ENCODE measurements at regions of chr5 and their contacts with region 1.

Region 1: GRCh38 chr5:60295423-60295822 is 401.9 kb upstream of the PDE4D start:
- DNase-seq: peak; percentile 25
- ATAC-seq: peak; percentile 82
- H3K4me3 ChIP-seq: no peak overlapping the region
- H3K27ac ChIP-seq: no peak overlapping the region
- H3K4me1 ChIP-seq: no peaks in the 10 kb centered on the region
- H3K27me3 ChIP-seq: no peaks in the 10 kb centered on the region
- CTCF ChIP-seq: peak; percentile 63 to 75 (median 64)
- EP300 ChIP-seq: no peak
- POLR2A ChIP-seq: no peak
- RAD21 ChIP-seq: peak; percentile 79

Region 2: DNA sequence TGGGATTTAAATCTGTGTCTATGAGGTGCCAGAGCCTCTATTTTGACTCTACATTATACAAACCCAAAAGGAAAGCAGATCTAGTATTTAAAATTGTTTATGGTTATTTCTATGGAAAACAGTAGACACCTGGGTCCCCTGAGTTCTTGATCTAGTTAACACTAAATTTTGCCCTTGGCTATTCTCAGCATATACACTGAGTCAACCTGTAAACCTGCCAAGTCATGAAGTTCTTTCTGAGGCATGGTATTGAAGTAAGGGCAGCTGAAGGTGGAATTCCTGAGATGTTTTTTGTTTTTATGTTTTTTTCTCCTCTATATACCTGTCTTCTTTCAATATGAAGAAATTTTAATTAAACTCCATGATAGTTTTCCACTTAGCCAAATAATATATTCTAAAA is 522.1 kb before region 1 on chr5:
- CTCF ChIA-PET with region 1: no interaction called
- POLR2A ChIA-PET with region 1: no interaction called
- RAD21 ChIA-PET with region 1: no interaction called
- SMC1A ChIA-PET with region 1: no interaction called
- in situ Hi-C with region 1: no loop called
- intact Hi-C with region 1: no loop called
- DNase-seq: no peak
- ATAC-seq: no peak
- H3K4me3 ChIP-seq: no peak overlapping the region
- H3K27ac ChIP-seq: no peak overlapping the region
- H3K4me1 ChIP-seq: no peaks in the 10 kb centered on the region
- H3K27me3 ChIP-seq: peaks cover 2 to 11% of the 10 kb centered on the region in 2 experiments; a peak in 2 of 4 replicates
- CTCF ChIP-seq: no peak
- EP300 ChIP-seq: no peak
- POLR2A ChIP-seq: no peak
- RAD21 ChIP-seq: no peak

Region 3: GRCh38 chr5:60271517-60271916 is 23.9 kb before region 1 on chr5:
- CTCF ChIA-PET with region 1: no interaction called
- POLR2A ChIA-PET with region 1: no interaction called
- RAD21 ChIA-PET with region 1: no interaction called
- SMC1A ChIA-PET with region 1: no interaction called
- in situ Hi-C with region 1: no loop called
- intact Hi-C with region 1: no loop called
- DNase-seq: no peak
- ATAC-seq: no peak
- H3K4me3 ChIP-seq: no peak overlapping the region
- H3K27ac ChIP-seq: no peak overlapping the region
- H3K4me1 ChIP-seq: no peaks in the 10 kb centered on the region
- H3K27me3 ChIP-seq: no peaks in the 10 kb centered on the region
- CTCF ChIP-seq: no peak
- EP300 ChIP-seq: no peak
- POLR2A ChIP-seq: no peak
- RAD21 ChIP-seq: no peak

Region 4: DNA sequence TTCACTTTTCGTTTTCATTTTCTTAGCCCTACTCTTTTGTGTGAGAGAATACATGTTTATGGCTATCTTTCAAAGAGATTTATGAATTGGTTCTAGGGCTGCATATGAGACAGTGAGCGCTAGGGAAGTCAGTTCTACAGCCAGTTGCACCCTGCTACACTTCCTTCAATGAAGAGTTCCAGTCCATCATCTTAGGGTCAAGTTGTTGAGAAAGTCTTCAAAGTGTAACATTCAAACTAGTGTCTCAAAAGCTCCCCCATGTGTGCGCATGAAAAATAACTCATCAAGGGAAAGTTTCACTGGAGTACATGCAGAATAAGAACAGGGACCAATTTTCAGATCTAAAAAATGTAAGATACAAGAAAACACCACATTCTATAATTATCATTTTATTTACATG is 87.3 kb after region 1 on chr5:
- CTCF ChIA-PET with region 1: interaction called, 21 read pairs
- POLR2A ChIA-PET with region 1: no interaction called
- RAD21 ChIA-PET with region 1: interaction called, 5 read pairs
- SMC1A ChIA-PET with region 1: interaction called, 10 read pairs
- in situ Hi-C with region 1: no loop called
- intact Hi-C with region 1: loop called (anchors 1 kb)
- DNase-seq: peak; percentile 40
- ATAC-seq: peak; percentile 57
- H3K4me3 ChIP-seq: no peak overlapping the region
- H3K27ac ChIP-seq: no peak overlapping the region
- H3K4me1 ChIP-seq: peaks cover 7% of the 10 kb centered on the region
- H3K27me3 ChIP-seq: no peaks in the 10 kb centered on the region
- CTCF ChIP-seq: peak; percentile 38 to 56 (median 46); a peak in 5 of 6 replicates
- EP300 ChIP-seq: no peak
- POLR2A ChIP-seq: no peak
- RAD21 ChIP-seq: peak; percentile 83

Region 5: GRCh38 chr5:60586307-60586901 is 291.0 kb after region 1 on chr5:
- CTCF ChIA-PET with region 1: interaction called, 11 read pairs
- POLR2A ChIA-PET with region 1: no interaction called
- RAD21 ChIA-PET with region 1: interaction called, 4 read pairs
- SMC1A ChIA-PET with region 1: interaction called, 5 read pairs
- in situ Hi-C with region 1: no loop called
- intact Hi-C with region 1: loop called (anchors 1 kb)
- DNase-seq: no peak
- ATAC-seq: peak; percentile 38; the same call in 2 of the 3 replicates
- H3K4me3 ChIP-seq: no peak overlapping the region
- H3K27ac ChIP-seq: no peak overlapping the region
- H3K4me1 ChIP-seq: peaks cover 8% of the 10 kb centered on the region; the same call in 1 of the 2 replicates
- H3K27me3 ChIP-seq: no peaks in the 10 kb centered on the region
- CTCF ChIP-seq: peak; percentile 32 to 55 (median 53); a peak in 5 of 6 replicates
- EP300 ChIP-seq: no peak
- POLR2A ChIP-seq: no peak
- RAD21 ChIP-seq: peak; percentile 78

Region 6: DNA sequence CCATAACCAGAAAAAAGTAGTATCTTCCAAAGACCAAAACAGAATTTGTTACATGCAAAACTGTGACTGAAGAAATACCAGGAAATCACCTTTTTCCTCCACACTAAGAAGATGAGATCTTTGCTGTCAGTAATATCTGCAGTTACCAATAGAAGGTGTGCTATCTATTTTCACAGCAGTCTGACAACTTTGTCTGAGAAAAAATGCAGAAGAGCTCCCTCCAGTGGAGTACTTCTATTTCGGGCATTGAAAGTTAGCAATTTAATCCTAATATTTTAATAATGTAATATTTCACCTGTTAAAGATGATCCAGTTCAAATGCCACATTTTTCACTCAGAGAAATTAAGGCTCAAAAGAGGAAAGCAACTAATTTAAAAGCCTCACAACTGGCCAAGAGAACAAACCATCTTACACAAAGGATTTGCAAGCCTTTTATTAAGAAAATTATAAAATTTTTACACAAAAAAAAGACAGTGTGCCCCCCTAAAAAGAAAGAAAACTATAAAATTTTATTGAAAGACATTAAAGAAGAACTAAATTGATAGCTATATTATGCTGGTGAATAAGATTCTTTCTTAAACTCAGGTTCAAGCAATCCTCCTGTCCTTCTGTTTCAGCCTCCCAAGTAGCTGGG is 354.0 kb after region 1 on chr5:
- CTCF ChIA-PET with region 1: interaction called, 10 read pairs
- POLR2A ChIA-PET with region 1: no interaction called
- RAD21 ChIA-PET with region 1: interaction called, 6 read pairs
- SMC1A ChIA-PET with region 1: interaction called, 11 read pairs
- in situ Hi-C with region 1: no loop called
- intact Hi-C with region 1: loop called (anchors 1 kb)
- DNase-seq: peak; percentile 15
- ATAC-seq: peak; percentile 86
- H3K4me3 ChIP-seq: no peak overlapping the region
- H3K27ac ChIP-seq: no peak overlapping the region
- H3K4me1 ChIP-seq: no peaks in the 10 kb centered on the region
- H3K27me3 ChIP-seq: no peaks in the 10 kb centered on the region
- CTCF ChIP-seq: peak; percentile 49 to 70 (median 59); a peak in 5 of 6 replicates
- EP300 ChIP-seq: no peak
- POLR2A ChIP-seq: no peak
- RAD21 ChIP-seq: peak; percentile 81

Region 7: GRCh38 chr5:60668686-60669304 is 373.4 kb after region 1 on chr5:
- CTCF ChIA-PET with region 1: interaction called, 15 read pairs
- POLR2A ChIA-PET with region 1: no interaction called
- RAD21 ChIA-PET with region 1: interaction called, 5 read pairs
- SMC1A ChIA-PET with region 1: interaction called, 6 read pairs
- in situ Hi-C with region 1: no loop called
- intact Hi-C with region 1: loop called (anchors 2 kb)
- DNase-seq: no peak
- ATAC-seq: no peak; the same call in 2 of the 3 replicates
- H3K4me3 ChIP-seq: no peak overlapping the region
- H3K27ac ChIP-seq: no peak overlapping the region
- H3K4me1 ChIP-seq: no peaks in the 10 kb centered on the region
- H3K27me3 ChIP-seq: no peaks in the 10 kb centered on the region
- CTCF ChIP-seq: peak; percentile 31 to 56 (median 46); a peak in 4 of 6 replicates
- EP300 ChIP-seq: no peak
- POLR2A ChIP-seq: no peak
- RAD21 ChIP-seq: peak; percentile 45

Region 8: DNA sequence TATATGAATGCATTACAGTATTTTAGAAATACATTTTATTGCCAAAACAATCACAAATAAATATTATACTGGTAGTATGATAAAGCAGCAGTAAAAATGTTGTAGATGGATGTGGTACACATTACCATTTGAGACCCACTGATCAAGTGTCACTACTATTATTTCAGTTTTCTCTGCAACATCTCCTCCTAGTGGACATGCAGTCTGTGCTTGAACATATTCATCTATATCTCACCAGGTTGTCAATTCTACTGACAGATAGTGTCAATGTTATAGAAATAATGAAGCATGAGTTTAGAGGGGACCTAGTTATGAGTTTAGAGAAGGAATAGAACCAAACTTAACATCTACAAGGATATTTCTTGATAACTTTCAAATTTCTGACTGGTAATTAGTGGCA is 587.8 kb after region 1 on chr5:
- CTCF ChIA-PET with region 1: no interaction called
- POLR2A ChIA-PET with region 1: no interaction called
- RAD21 ChIA-PET with region 1: no interaction called
- SMC1A ChIA-PET with region 1: no interaction called
- in situ Hi-C with region 1: no loop called
- intact Hi-C with region 1: loop called (anchors 5 kb)
- DNase-seq: no peak
- ATAC-seq: peak; percentile 68
- H3K4me3 ChIP-seq: no peak overlapping the region
- H3K27ac ChIP-seq: no peak overlapping the region
- H3K4me1 ChIP-seq: no peaks in the 10 kb centered on the region
- H3K27me3 ChIP-seq: no peaks in the 10 kb centered on the region
- CTCF ChIP-seq: peak; percentile 47 to 58 (median 50); a peak in 5 of 6 replicates
- EP300 ChIP-seq: no peak
- POLR2A ChIP-seq: no peak
- RAD21 ChIP-seq: peak; percentile 50

Region 9: DNA sequence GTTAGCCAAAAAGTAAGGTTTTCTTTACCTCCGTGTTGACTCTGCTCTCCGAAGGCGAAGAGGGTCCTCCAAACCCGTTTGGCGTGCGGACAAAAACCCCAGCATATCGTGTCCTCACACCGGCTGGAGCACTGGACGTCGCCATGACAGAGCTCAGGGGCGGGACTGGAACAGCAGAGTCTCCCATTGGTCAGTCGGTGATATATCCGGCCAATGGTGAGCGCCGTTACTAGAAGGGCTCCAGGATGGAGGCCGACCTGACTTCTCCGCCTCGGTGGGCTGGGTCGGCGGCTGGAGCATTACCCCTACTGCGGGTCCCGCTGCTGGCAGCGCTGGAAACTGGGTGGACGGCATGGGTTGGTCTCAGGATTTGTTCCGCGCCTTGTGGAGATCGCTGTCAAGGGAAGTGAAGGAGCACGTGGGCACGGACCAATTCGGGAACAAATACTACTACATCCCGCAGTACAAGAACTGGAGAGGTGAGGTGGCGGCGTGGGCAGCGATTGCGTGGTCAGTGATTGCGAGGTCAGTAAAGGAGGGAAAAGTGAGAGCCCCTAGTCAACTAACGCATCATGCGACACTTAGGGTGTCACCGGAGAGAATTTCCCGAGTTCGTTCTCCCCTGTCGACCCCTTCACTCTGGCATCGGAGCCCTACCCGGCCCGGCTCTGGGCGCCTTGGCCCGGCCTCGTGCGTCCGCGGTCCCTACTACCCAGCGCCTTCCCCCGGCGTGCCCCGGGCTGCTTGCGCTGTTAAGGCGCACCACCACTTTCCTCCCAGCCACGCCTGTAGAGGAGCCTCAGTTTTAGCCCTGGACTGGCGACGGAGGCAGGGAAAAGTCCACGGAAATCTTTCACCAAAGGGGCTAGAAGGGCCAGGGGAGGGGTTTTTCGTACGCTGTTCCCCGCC is 649.7 kb after region 1 on chr5 and contains the starts of genes ERCC8 and NDUFAF2:
- CTCF ChIA-PET with region 1: no interaction called
- POLR2A ChIA-PET with region 1: no interaction called
- RAD21 ChIA-PET with region 1: no interaction called
- SMC1A ChIA-PET with region 1: no interaction called
- in situ Hi-C with region 1: no loop called
- intact Hi-C with region 1: loop called (anchors 5 kb)
- DNase-seq: peak; percentile 73
- ATAC-seq: peak; percentile 98
- H3K4me3 ChIP-seq: peak within 1 kb of the TSS; percentile 98
- H3K27ac ChIP-seq: peak within 1 kb of the TSS; percentile 83
- H3K4me1 ChIP-seq: no peaks in the 10 kb centered on the region
- H3K27me3 ChIP-seq: no peaks in the 10 kb centered on the region
- CTCF ChIP-seq: no peak
- EP300 ChIP-seq: no peak
- POLR2A ChIP-seq: peak; percentile 78
- RAD21 ChIP-seq: no peak
- polyA plus RNA-seq, gene ERCC8: 16.8 to 31.2 TPM
- polyA plus RNA-seq, gene NDUFAF2: 111 to 121 TPM

Region 10: DNA sequence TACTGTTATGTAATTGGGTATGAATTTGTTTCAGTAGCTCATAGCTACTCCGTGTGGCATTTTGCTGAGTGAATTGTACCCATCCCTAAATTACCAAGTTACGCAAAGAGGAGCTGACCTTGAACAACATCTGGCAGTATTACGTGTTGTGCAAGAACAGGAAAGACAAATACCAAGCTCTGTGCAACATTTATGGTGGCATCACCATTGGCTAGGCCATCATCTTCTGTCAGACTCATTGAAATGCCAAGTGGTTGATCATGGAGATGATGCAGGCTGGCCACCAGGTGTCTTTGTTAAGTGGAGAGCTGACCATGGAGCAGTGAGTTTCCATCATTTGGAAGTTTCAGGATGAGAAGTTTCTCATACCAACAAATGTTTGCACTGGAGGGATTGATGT is 1051.7 kb after region 1 on chr5:
- CTCF ChIA-PET with region 1: no interaction called
- POLR2A ChIA-PET with region 1: no interaction called
- RAD21 ChIA-PET with region 1: no interaction called
- SMC1A ChIA-PET with region 1: no interaction called
- in situ Hi-C with region 1: no loop called
- intact Hi-C with region 1: no loop called
- DNase-seq: no peak
- ATAC-seq: no peak
- H3K4me3 ChIP-seq: no peak overlapping the region
- H3K27ac ChIP-seq: no peak overlapping the region
- H3K4me1 ChIP-seq: no peaks in the 10 kb centered on the region
- H3K27me3 ChIP-seq: no peaks in the 10 kb centered on the region
- CTCF ChIP-seq: no peak
- EP300 ChIP-seq: no peak
- POLR2A ChIP-seq: no peak
- RAD21 ChIP-seq: no peak

Measured in GM12878 (cell line).